Endothelial cell of umbilical vein (primary cell): ENCODE measurements at regions of chr13 and their contacts with region 1.

Region 1: DNA sequence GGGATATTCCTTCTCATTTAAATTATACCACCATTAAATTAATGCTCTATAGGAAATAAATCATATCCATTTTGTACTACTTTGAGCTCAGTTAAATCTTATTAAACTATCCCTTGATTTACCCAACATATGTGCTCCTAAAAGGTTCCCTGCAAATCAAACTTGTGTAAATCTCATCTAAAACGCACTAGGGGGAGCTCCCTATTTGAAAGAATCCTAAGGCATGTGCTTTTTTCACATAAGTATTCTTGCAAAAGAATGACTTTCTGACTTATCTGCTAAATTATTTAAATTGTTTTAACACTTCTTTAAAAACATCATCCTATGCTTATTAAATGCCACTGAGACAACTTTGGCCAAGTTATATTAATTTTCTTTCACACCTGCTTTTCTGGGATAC is 7.9 kb downstream of the INTS6 start:
- DNase-seq: peak; percentile 11
- H3K4me3 ChIP-seq: no peak overlapping the region
- H3K27ac ChIP-seq: no peak overlapping the region
- H3K4me1 ChIP-seq: no peaks in the 10 kb centered on the region
- H3K27me3 ChIP-seq: no peaks in the 10 kb centered on the region
- CTCF ChIP-seq: no peak
- POLR2A ChIP-seq: no peak

Region 2: DNA sequence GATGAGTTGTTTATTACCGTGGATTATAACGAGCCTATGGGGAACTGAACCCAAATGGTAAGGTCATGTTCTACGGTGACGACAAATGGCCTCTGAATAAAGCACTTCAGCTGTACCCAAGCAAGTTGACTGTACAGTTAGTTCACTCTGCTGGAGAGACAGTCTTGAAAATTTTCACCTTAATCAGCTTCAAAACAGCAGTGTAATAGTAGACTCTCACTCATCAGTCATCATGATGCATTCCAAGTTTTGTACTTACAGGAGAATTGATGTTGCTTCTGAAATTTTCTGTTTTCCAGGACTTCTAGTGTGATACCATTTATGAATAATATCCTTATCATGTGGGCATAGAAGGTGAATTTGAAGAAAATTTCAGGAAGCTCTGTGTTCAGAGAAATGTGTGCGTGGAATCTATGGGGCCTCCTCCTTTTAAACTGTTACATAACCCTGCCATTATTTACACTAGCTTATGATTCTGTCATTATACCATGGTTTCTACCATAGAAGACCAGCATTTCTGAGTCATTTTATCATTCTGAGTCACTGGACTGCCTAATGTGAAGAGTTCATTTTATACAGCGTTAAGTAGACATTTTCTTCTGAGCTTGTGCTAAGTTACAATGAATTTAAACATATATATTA is 236.2 kb after region 1 on chr13:
- CTCF ChIA-PET with region 1: no interaction called
- POLR2A ChIA-PET with region 1: no interaction called
- dilution Hi-C with region 1: no loop called
- intact Hi-C with region 1: no loop called
- DNase-seq: no peak
- H3K4me3 ChIP-seq: no peak overlapping the region
- H3K27ac ChIP-seq: no peak overlapping the region
- H3K4me1 ChIP-seq: no peaks in the 10 kb centered on the region
- H3K27me3 ChIP-seq: no peaks in the 10 kb centered on the region
- CTCF ChIP-seq: no peak
- POLR2A ChIP-seq: no peak

Region 3: DNA sequence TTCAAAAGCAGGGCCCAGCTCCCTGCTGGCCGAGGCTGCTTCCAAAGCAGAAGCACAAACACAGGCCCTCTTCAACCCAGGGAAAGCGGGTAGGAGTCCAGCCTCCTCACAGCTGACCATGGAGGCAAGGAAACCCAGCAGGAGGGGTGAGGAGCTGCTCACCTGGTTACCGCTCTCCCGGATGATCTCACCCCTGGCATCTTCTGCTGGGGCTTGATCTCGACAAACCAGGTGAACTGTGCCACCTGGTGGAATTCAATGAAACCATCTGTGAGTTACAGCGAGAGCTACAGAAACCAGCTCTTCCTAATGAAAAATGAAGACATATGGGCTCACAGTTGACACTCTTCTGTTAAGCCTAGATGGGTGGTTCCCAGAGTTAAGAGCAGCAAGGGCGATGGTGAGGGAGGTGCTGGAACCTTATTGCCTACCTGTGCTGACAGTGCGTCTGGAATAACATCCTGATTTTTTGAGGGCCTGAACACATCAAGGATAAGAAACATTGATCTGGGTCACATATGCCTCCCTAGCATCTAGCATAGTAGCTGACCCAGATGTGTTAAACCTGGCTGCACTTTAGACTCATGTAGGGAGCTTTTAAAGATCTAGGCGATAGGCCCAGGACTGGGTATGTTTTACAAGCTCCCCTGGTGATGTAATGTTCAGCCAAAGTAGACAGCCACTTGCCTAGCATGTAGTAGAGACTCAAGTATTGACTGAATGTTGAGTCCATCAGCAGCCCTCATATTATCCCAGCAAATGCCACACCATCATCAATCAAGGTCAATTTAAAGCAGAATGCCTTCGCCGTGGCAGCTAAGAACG is 353.0 kb after region 1 on chr13:
- CTCF ChIA-PET with region 1: interaction called, 16 read pairs
- POLR2A ChIA-PET with region 1: no interaction called
- dilution Hi-C with region 1: no loop called
- intact Hi-C with region 1: no loop called
- DNase-seq: peak; percentile 36
- H3K4me3 ChIP-seq: no peak overlapping the region
- H3K27ac ChIP-seq: no peak overlapping the region
- H3K4me1 ChIP-seq: peaks cover 24% of the 10 kb centered on the region
- H3K27me3 ChIP-seq: no peaks in the 10 kb centered on the region
- CTCF ChIP-seq: peak; percentile 16 to 27
- POLR2A ChIP-seq: no peak

Region 4: GRCh38 chr13:52179925-52180324 is 735.0 kb after region 1 on chr13:
- CTCF ChIA-PET with region 1: no interaction called
- POLR2A ChIA-PET with region 1: no interaction called
- dilution Hi-C with region 1: no loop called
- intact Hi-C with region 1: no loop called
- DNase-seq: no peak
- H3K4me3 ChIP-seq: no peak overlapping the region
- H3K27ac ChIP-seq: no peak overlapping the region
- H3K4me1 ChIP-seq: peaks cover 5% of the 10 kb centered on the region
- H3K27me3 ChIP-seq: no peaks in the 10 kb centered on the region
- CTCF ChIP-seq: no peak
- POLR2A ChIP-seq: no peak